A549 (cell line): ENCODE measurements at regions of chr5 and their contacts with region 1.

Region 1: GRCh38 chr5:132490486-132491367 is at the start of gene IRF1:
- DNase-seq: peak; percentile 95 to 97
- ATAC-seq: peak; percentile 86 to 94
- H3K4me3 ChIP-seq: peak within 1 kb of the TSS; percentile 83
- H3K27ac ChIP-seq: peak within 1 kb of the TSS; percentile 92 to 96
- H3K4me1 ChIP-seq: peaks cover 36% of the 10 kb centered on the region
- CTCF ChIP-seq: no peak; the same call in 2 of the 3 replicates
- EP300 ChIP-seq: no peak
- POLR2A ChIP-seq: peak; percentile 94
- RAD21 ChIP-seq: no peak
- polyA plus RNA-seq, gene IRF1: 10.9 and 11.2 TPM in 2 replicates

Region 2: GRCh38 chr5:132293066-132293991 is 197.4 kb before region 1 on chr5:
- CTCF ChIA-PET with region 1: interaction called, 4 read pairs
- POLR2A ChIA-PET with region 1: interaction called, 10 read pairs
- DNase-seq: peak; percentile 91
- ATAC-seq: peak; percentile 67 to 74
- H3K4me3 ChIP-seq: peak overlapping the region; percentile 65
- H3K27ac ChIP-seq: peak overlapping the region; percentile 95 to 99
- H3K4me1 ChIP-seq: peaks cover 30% of the 10 kb centered on the region
- CTCF ChIP-seq: peak; percentile 20; the same call in 1 of the 3 replicates
- EP300 ChIP-seq: 0 out of 5 replicates have a peak, but pooled peaks of 1 of the 2 experiments have one; percentile 14
- POLR2A ChIP-seq: peak; percentile 94
- RAD21 ChIP-seq: no peak

Region 3: DNA sequence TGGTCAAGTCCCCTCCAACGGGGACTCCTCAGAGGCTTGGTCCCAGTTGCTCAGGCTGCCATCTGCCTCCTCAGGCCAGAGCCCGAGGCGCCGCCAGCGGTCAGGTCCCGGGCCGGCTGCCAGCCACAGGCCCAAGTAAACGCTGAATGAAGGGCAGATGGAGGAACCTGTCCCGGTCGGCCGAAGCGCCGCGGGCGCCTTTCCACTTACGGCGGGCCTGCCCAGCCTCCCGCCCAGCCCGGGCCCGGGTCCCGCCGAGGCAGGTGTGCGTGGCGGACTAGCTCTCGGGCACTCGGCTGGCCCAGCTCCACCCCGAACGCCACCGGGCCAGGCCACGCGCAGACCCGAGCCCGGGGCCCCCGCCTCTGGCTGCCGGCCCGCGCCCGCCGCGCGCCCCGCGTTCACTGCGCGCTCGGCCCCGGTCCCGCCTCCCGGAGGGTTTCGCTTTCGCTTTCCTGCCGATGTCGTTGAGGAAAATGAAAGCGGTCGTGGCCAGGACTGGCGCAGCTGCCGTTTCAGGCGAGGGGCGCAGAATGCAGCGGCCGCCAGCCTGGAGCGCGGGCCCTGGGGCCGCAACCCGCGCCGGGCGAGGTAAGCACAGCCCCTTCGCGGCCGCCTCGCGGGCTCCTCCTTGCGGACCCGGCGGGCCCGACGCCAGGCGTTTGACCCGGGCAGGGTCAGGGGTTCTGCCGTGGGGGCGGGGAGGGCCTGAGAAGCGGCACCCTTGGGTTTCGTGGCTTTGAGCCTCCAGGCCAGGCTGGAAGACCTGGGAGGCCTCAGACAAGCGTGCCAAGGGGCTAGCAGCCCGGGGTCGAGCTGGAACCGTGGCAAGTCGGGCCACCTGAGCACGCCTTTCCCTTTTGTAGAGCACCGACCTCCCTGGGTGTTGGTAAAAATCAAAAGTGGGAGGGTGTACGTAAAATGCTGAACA is 80.0 kb before region 1 on chr5:
- CTCF ChIA-PET with region 1: interaction called, 20 read pairs
- POLR2A ChIA-PET with region 1: interaction called, 20 read pairs
- DNase-seq: peak; percentile 79 to 87
- ATAC-seq: peak; percentile 94 to 95
- H3K4me3 ChIP-seq: peak overlapping the region; percentile 69
- H3K27ac ChIP-seq: peak overlapping the region; percentile 96 to 98
- H3K4me1 ChIP-seq: peaks cover 33% of the 10 kb centered on the region
- CTCF ChIP-seq: peak; percentile 74
- EP300 ChIP-seq: no peak
- POLR2A ChIP-seq: peak; percentile 73
- RAD21 ChIP-seq: peak; percentile 52 to 78

Region 4: DNA sequence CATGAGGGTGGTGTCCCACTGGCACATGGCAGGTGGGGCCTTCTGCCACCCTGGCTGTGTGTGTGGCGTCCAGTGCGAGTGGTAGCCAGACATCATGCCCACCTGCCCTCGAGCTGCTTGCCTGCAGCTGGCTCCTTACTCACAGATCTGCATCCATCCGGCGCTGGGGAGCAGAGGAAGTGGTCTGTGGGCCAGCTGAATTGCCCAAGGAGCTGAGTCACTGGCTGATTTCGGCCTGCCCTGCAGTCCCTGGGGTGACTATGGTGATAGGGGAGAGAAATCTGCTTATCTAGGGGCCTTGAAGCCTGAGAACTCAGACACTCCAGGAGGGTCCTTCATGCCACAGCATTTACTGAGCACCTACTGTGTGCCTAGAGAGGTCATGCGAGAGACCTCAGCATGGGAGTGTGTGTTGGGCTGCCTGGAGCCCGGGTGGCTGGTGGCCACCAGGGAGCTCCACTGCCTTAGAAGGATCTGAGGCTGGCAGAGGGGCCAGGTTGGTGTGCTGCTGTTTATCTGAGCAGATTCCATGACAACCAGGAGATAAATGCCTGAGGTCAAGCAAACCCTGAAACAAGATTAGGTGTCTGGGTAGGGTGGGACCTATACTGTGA is 64.1 kb before region 1 on chr5:
- CTCF ChIA-PET with region 1: interaction called, 91 read pairs
- POLR2A ChIA-PET with region 1: interaction called, 28 read pairs
- DNase-seq: peak; percentile 46 to 65
- ATAC-seq: peak; percentile 66 to 80
- H3K4me3 ChIP-seq: no peak overlapping the region
- H3K27ac ChIP-seq: peak overlapping the region; percentile 67 to 84
- H3K4me1 ChIP-seq: peaks cover 60% of the 10 kb centered on the region
- CTCF ChIP-seq: peak; percentile 20; the same call in 2 of the 3 replicates
- EP300 ChIP-seq: no peak
- POLR2A ChIP-seq: no peak
- RAD21 ChIP-seq: peak in 1 of 2 experiments; percentile 17; a peak in 1 of 5 replicates

Region 5: DNA sequence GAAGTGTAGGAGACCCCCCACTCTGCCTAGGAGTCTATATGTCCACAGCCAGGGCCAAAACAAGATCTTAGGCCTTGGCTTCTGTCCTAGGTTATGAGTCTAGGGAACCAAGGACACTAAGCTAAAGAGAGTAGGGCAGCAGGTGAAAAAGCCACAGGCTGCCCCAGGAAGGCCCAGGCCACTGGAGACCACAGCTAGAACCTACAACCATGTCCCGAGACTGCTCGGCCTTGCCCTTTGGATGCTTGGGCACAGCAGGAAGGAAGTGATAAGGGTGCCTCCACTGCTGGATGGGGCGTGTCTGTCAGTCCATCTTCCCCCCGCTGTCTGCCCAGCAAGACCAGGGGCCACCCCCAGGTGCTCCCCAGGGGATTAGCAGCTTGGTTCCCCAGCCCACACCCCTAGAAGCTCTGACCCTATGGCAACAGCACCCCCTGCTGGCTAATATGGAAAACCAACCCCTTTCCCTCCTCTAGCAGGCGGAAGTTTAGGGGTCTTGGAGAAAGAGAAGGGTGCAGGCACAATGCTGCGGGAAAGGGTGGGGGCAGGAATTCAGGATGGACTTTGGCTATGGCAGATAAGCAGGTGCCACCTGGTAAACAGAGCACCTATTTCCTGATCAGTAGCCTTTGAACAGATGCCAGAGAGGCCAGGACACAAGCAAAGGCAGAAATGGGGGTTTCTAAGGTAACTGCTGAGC is 10.4 kb after region 1 on chr5:
- CTCF ChIA-PET with region 1: interaction called, 30 read pairs
- POLR2A ChIA-PET with region 1: interaction called, 6 read pairs
- DNase-seq: peak; percentile 51 to 71
- ATAC-seq: peak in 1 of 2 experiments; percentile 29; a peak in 3 of 6 replicates
- H3K4me3 ChIP-seq: no peak overlapping the region
- H3K27ac ChIP-seq: peak overlapping the region; percentile 37 to 97; a peak in 4 of 6 replicates
- H3K4me1 ChIP-seq: peaks cover 41% of the 10 kb centered on the region
- CTCF ChIP-seq: peak; percentile 89
- EP300 ChIP-seq: no peak
- POLR2A ChIP-seq: no peak
- RAD21 ChIP-seq: peak; percentile 94 to 96

Region 6: DNA sequence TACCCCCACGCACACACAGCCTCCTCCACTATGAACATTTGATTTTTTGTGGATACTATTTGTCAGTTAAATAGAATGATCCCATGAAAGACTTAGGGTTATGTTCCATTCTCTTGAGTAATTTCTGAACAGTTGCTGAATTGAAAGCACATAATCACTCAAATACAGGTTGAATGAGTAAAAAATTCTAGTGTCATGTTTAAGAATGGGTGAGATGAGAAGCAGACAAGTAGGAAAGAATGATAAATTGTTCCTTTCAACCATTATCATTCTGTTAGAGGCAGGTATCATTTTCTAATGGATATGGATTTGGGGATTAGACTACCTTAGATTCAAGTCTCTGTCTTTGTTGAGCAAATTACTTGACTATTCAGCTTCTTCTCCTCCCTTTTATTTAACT is 85.4 kb after region 1 on chr5:
- CTCF ChIA-PET with region 1: no interaction called
- POLR2A ChIA-PET with region 1: no interaction called
- DNase-seq: no peak
- ATAC-seq: no peak
- H3K4me3 ChIP-seq: no peak overlapping the region
- H3K27ac ChIP-seq: no peak overlapping the region
- H3K4me1 ChIP-seq: no peaks in the 10 kb centered on the region
- CTCF ChIP-seq: no peak
- EP300 ChIP-seq: no peak
- POLR2A ChIP-seq: no peak
- RAD21 ChIP-seq: no peak